Heart right ventricle (tissue), 16 donors: ENCODE measurements at regions of chr12 and their contacts with region 1.

Region 1: DNA sequence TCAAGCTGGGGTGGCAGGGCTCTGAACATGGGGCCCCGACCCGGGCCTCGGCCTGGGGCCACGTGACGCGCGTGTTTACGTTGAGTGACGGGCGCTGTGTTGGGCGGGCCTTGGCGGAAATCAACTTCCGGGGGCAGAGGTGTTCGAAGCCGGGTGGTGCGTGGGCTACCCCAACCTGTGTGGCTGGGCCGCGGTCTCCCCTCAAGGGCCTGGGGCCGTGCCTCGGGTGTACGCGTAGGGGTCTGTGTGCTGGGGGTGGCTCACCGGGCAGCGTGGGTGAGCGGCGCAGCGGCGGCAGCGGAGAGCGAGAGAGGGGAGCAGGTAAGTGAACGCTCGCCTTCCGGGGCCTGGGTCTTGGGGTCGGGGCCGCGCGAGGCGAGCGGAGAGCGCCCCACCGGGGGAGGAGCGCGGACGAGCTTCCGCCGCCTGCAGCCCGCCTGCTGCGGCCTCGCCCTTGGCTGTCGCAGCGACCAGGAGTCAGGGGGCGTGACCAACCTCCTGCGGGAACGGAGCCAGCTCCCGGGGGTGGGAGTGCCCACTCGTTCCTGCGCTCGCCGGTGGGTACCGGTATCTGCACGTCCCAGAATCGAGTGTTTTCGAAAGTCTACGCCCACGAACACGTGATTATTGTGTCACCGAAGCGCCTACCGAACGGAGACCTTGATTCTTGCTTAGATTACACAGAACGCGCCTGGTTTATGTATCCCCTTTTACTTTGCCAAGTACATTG is at the start of gene CCDC91:
- DNase-seq: peak; percentile 86 to 87
- ATAC-seq: peak; percentile 91 to 98 (median 92)
- H3K4me3 ChIP-seq: peak within 1 kb of the TSS; percentile 70 to 97 (median 78)
- H3K27ac ChIP-seq: peak within 1 kb of the TSS; percentile 91 to 99 (median 96)
- H3K4me1 ChIP-seq: peaks cover 0 to 22% (median 14%) of the 10 kb centered on the region in 9 donors
- H3K27me3 ChIP-seq: no peaks in the 10 kb centered on the region
- CTCF ChIP-seq: peak in 1 of 9 donors; percentile 28
- total RNA-seq, gene CCDC91: 44.7 to 66.4 (median 56.7) TPM

Region 2: DNA sequence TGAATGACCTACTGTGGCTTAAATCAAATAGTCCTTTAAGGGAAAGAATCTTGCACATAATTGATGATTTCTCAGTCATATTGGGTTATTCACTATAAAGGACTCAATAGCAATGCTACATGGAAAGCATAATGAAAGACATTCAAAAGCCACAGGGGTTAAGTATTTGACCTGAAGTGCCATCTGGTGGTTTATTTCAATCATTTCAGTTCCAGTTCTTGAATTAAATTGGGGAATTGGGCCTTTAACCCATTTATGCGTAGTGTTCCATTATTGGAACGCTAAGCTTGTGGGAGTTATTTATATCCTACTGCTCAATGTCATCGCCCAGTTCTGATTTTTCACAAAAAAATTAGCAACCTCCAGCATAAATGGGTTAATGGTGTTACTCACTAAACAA is 1066.8 kb before region 1 on chr12:
- intact Hi-C with region 1: no loop called
- DNase-seq: no peak
- ATAC-seq: no peak
- H3K4me3 ChIP-seq: no peak overlapping the region
- H3K27ac ChIP-seq: no peak overlapping the region
- H3K4me1 ChIP-seq: no peaks in the 10 kb centered on the region
- H3K27me3 ChIP-seq: no peaks in the 10 kb centered on the region
- CTCF ChIP-seq: peak in 3 of 9 donors; percentile 9 to 38 (median 33)

Region 3: DNA sequence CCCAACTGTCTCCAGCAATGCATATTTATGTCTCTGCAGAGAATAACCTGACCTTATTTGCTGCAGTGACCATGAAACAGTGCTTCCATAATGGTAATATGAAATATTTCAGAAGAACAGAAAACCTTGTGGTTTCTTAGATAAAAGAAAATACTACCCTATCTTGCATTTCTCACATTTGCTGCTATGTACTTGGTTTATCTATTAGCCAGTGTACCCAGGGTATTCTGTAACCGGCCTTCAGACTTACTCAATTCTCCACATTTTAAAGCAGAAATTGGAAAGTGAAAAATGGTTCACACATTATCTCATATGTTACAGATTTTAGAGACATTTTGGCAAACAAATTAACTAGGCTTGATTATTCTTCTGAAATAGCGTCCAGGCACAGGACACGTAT is 58.1 kb before region 1 on chr12:
- intact Hi-C with region 1: no loop called
- DNase-seq: no peak
- ATAC-seq: no peak
- H3K4me3 ChIP-seq: no peak overlapping the region
- H3K27ac ChIP-seq: no peak overlapping the region
- H3K4me1 ChIP-seq: peaks cover 0 to 10% (median 0%) of the 10 kb centered on the region in 9 donors
- H3K27me3 ChIP-seq: no peaks in the 10 kb centered on the region
- CTCF ChIP-seq: no peak

Region 4: DNA sequence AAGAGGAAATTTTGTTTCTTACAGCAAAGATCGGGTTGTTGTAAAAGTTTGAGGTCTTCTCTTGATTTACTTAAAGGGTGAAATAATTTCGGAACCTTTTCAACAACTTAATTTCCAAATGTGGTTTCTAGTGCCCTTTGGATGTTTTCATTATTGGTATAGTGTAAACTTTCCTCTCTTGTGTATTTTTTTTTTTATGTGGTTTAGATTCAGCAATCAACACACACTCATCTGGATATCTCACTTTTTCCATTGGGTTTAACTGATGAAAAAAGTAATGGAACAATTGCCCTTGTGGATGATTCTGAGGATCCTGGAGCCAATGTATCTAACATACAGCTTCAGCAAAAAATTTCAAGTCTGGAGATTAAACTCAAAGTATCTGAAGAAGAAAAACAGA is 116.0 kb after region 1 on chr12:
- intact Hi-C with region 1: no loop called
- DNase-seq: no peak
- ATAC-seq: no peak
- H3K4me3 ChIP-seq: no peak overlapping the region
- H3K27ac ChIP-seq: no peak overlapping the region
- H3K4me1 ChIP-seq: no peaks in the 10 kb centered on the region
- H3K27me3 ChIP-seq: no peaks in the 10 kb centered on the region
- CTCF ChIP-seq: no peak

Region 5: GRCh38 chr12:28963554-28963953 is 773.1 kb after region 1 on chr12:
- intact Hi-C with region 1: loop called in 1 of 10 experiments (anchors 10 kb)
- DNase-seq: no peak
- ATAC-seq: no peak
- H3K4me3 ChIP-seq: no peak overlapping the region
- H3K27ac ChIP-seq: no peak overlapping the region
- H3K4me1 ChIP-seq: peaks cover 0 to 56% (median 30%) of the 10 kb centered on the region in 9 donors
- H3K27me3 ChIP-seq: no peaks in the 10 kb centered on the region
- CTCF ChIP-seq: peak in 7 of 9 donors; percentile 5 to 53 (median 32)